Adrenal gland (tissue), 19 donors: ENCODE measurements at regions of chr14 and their contacts with region 1.

Region 1: GRCh38 chr14:94129111-94129757 is at the start of gene IFI27L2:
- DNase-seq: peak; percentile 73 to 91 (median 82)
- H3K4me3 ChIP-seq: peak within 1 kb of the TSS; percentile 11 to 61 (median 28)
- H3K27ac ChIP-seq: peak within 1 kb of the TSS; percentile 8 to 89 (median 74)
- H3K4me1 ChIP-seq: peaks cover 4 to 11% of the 10 kb centered on the region in 2 donors
- H3K27me3 ChIP-seq: no peaks in the 10 kb centered on the region
- CTCF ChIP-seq: peak in 5 of 6 experiments; percentile 22 to 49 (median 46)
- POLR2A ChIP-seq: peak in 1 of 2 donors; percentile 32
- total RNA-seq, gene IFI27L2: 85.9 to 312 (median 109) TPM

Region 2: GRCh38 chr14:94079891-94080420 is 49.3 kb before region 1 on chr14:
- intact Hi-C with region 1: loop called in 1 of 2 experiments (anchors 10 kb)
- DNase-seq: no peak
- H3K4me3 ChIP-seq: peak overlapping the region; percentile 60 to 97 (median 83)
- H3K27ac ChIP-seq: peak overlapping the region in 4 of 5 donors; percentile 91 to 99 (median 96)
- H3K4me1 ChIP-seq: peaks cover 53 to 64% of the 10 kb centered on the region in 2 donors
- H3K27me3 ChIP-seq: no peaks in the 10 kb centered on the region
- CTCF ChIP-seq: no peak
- POLR2A ChIP-seq: no peak

Region 3: DNA sequence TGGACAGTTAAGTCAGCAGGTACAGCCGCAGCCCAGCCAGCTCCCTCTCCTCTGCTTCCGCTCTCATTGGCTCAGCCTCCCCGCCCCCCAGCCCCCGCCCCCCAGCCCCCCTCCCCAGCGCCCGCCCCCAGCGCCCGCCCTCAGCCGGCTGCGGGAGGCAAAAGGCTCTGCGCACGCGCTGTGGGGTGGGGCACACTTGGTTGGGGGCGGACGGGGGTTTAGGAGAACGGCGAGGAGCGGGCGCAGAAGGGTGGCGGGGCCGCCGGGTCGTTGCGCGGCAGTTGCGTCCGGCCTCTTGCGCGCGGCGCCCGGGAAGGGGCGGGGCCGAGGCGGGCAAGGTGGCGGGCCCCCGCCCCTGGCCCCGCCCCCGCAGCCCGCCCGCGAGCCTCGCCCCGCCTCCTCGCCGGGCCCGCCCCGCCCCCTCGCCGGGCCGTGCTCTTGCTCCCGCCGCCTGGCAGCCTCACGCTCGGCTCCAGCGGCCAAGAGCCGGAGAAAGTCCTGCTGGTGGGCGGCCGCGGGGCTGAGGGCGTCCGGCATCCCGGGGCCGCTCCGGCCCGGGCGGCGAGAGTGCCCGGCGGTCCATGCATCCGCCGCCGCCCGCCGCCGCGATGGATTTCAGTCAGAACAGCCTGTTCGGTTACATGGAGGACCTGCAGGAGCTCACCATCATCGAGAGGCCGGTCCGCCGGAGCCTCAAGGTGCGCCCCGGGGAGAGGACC is 44.8 kb after region 1 on chr14 and contains the start of gene PPP4R4:
- intact Hi-C with region 1: no loop called
- DNase-seq: peak; percentile 78 to 91 (median 84)
- H3K4me3 ChIP-seq: peak within 1 kb of the TSS in 3 of 4 donors; percentile 30 to 61 (median 39)
- H3K27ac ChIP-seq: peak within 1 kb of the TSS in 2 of 5 donors; percentile 32 to 76
- H3K4me1 ChIP-seq: peaks cover 0 to 15% of the 10 kb centered on the region in 2 donors
- H3K27me3 ChIP-seq: peaks cover 9% of the 10 kb centered on the region
- CTCF ChIP-seq: no peak
- POLR2A ChIP-seq: no peak
- total RNA-seq, gene PPP4R4: 0.24 to 6.2 (median 0.57) TPM